K562 (cell line): ENCODE measurements at regions of chr1 and their contacts with region 1.

Region 1: DNA sequence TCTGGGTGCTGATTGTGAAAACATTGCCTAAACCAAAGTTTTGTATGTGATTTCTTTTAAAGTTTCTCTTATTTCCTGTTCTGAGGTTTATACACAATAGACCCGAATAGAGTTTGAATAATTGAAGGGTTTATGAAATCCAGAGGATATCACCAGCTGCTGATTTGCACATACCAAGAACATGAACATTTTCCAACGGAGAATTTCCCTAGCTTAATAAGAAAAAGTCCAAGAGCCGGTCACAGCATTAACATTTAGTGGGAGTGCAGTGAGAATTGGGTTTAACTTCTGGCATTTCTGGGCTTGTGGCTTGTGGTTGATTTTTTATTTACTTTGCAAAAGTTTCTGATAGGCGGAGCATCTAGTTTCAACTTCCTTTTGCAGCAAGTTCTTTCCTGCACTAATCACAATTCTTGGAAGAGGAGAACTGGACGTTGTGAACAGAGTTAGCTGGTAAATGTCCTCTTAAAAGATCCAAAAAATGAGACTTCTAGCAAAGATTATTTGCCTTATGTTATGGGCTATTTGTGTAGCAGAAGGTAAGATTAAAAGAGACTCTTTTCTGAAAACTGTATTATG is at the start of gene CFH:
- DNase-seq: peak in 2 of 4 experiments; percentile 21 to 70
- ATAC-seq: peak; percentile 58
- H3K4me3 ChIP-seq: peak within 1 kb of the TSS; percentile 34
- H3K27ac ChIP-seq: peak within 1 kb of the TSS; percentile 57; the same call in 2 of the 3 replicates
- H3K4me1 ChIP-seq: peaks cover 0 to 3% of the 10 kb centered on the region in 2 experiments; a peak in 2 of 5 replicates
- H3K27me3 ChIP-seq: no peaks in the 10 kb centered on the region
- CTCF ChIP-seq: no peak
- EP300 ChIP-seq: peak; percentile 31; the same call in 1 of the 2 replicates
- POLR2A ChIP-seq: peak; percentile 75
- RAD21 ChIP-seq: no peak; a peak in 1 of 4 replicates
- polyA plus RNA-seq, gene CFH: 45.6 to 58.8 TPM

Region 2: GRCh38 chr1:196493881-196494280 is 157.8 kb before region 1 on chr1:
- CTCF ChIA-PET with region 1: no interaction called
- POLR2A ChIA-PET with region 1: interaction called, 5 read pairs
- in situ Hi-C with region 1: no loop called
- intact Hi-C with region 1: loop called (anchors 2 kb)
- DNase-seq: peak in 2 of 4 experiments; percentile 13 to 44
- ATAC-seq: peak; percentile 73
- H3K4me3 ChIP-seq: peak overlapping the region; percentile 35; the same call in 1 of the 2 replicates
- H3K27ac ChIP-seq: peak overlapping the region; percentile 79
- H3K4me1 ChIP-seq: no peaks in the 10 kb centered on the region
- H3K27me3 ChIP-seq: no peaks in the 10 kb centered on the region
- CTCF ChIP-seq: no peak
- EP300 ChIP-seq: no peak
- POLR2A ChIP-seq: no peak
- RAD21 ChIP-seq: no peak

Region 3: GRCh38 chr1:196608390-196609369 is 43.0 kb before region 1 on chr1 and contains the start of gene KCNT2:
- CTCF ChIA-PET with region 1: no interaction called
- POLR2A ChIA-PET with region 1: no interaction called
- in situ Hi-C with region 1: no loop called
- intact Hi-C with region 1: no loop called
- DNase-seq: peak; percentile 13 to 38 (median 20)
- ATAC-seq: peak; percentile 83
- H3K4me3 ChIP-seq: peak within 1 kb of the TSS; percentile 21
- H3K27ac ChIP-seq: no peak within 1 kb of the TSS
- H3K4me1 ChIP-seq: peaks cover 0 to 3% of the 10 kb centered on the region in 2 experiments; a peak in 1 of 5 replicates
- H3K27me3 ChIP-seq: no peaks in the 10 kb centered on the region
- CTCF ChIP-seq: no peak
- EP300 ChIP-seq: no peak
- POLR2A ChIP-seq: no peak
- RAD21 ChIP-seq: no peak
- polyA plus RNA-seq, gene KCNT2: 0.13 to 0.28 TPM

Region 4: DNA sequence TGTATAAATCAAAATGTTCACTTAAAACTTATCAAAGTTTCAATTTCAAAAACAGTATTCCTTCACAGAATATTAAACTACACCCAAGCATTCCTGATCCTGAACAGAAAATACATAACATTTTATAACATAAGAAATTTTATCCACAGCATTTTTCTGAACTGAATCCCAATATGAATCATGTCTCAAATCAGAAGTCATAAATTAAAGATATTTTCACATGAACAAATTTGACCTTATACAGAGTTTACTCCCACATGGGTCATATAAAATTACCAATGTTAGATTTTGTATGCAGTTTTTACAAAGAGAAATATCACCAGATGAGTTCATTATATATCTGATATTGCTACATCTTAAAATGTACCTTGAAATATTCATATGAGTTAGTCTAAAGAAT is 543.4 kb after region 1 on chr1:
- CTCF ChIA-PET with region 1: no interaction called
- POLR2A ChIA-PET with region 1: no interaction called
- in situ Hi-C with region 1: no loop called
- intact Hi-C with region 1: loop called (anchors 5 kb)
- DNase-seq: no peak
- ATAC-seq: no peak
- H3K4me3 ChIP-seq: no peak overlapping the region
- H3K27ac ChIP-seq: no peak overlapping the region
- H3K4me1 ChIP-seq: 0 out of 5 replicates have a peak, but pooled peaks cover 0 to 3% of the 10 kb centered on the region in 2 experiments
- H3K27me3 ChIP-seq: no peaks in the 10 kb centered on the region
- CTCF ChIP-seq: no peak
- EP300 ChIP-seq: no peak
- POLR2A ChIP-seq: no peak
- RAD21 ChIP-seq: no peak